ENCODE measurements at regions of chr7 and their contacts with region 1.

Region 1: GRCh38 chr7:55144333-55145317 is 125.8 kb downstream of the EGFR start:
- DNase-seq: no peak

Region 2: GRCh38 chr7:55085511-55086412 is 58.9 kb before region 1 on chr7:
- intact Hi-C with region 1: loop called in 1 of 2 experiments (anchors 2 kb)
- DNase-seq: no peak

Region 3: DNA sequence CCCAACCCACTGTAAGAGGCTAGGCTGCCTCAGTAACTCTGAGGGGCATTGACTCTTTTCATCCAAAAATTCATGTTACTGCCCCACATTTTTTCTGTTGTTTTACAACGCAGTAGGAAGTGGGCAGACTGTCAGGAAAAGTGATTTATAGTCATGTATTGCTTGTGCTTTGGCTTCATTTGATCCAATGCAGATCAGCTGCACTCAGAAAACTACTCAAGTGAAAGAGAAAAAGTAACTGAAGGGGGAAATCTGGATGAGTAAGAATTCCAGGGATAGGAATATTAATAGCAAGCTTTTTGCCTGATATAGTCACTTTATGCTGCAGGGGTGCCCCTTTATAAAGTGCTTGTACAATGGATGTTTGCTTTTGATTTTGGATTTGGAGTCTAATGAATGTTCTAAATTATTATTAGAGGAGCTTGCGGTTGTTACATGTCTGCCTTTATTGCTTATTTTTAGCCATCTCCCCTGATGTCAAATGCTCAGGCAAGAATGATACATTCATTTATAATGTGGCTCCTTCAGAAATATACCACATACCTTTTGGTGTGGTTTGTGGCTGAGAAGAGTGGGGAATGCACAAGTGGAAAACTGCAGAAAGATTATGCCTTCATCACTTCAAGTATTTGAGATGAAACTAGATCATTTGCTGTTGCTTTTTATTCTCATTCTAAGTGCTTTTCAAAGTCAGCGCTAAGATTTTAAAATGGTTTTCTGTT is 39.8 kb before region 1 on chr7:
- intact Hi-C with region 1: loop called in 1 of 2 experiments (anchors 1 kb)
- DNase-seq: no peak

Measured in posterior vena cava (tissue), 2 donors.